ENCODE measurements at regions of chr12 and their contacts with region 1.

Region 1: GRCh38 chr12:12890815-12891645 is at the start of gene GPRC5A:
- DNase-seq: peak; percentile 87
- H3K27ac ChIP-seq: peak within 1 kb of the TSS; percentile 92
- CTCF ChIP-seq: peak; percentile 7; the same call in 1 of the 2 replicates

Region 2: DNA sequence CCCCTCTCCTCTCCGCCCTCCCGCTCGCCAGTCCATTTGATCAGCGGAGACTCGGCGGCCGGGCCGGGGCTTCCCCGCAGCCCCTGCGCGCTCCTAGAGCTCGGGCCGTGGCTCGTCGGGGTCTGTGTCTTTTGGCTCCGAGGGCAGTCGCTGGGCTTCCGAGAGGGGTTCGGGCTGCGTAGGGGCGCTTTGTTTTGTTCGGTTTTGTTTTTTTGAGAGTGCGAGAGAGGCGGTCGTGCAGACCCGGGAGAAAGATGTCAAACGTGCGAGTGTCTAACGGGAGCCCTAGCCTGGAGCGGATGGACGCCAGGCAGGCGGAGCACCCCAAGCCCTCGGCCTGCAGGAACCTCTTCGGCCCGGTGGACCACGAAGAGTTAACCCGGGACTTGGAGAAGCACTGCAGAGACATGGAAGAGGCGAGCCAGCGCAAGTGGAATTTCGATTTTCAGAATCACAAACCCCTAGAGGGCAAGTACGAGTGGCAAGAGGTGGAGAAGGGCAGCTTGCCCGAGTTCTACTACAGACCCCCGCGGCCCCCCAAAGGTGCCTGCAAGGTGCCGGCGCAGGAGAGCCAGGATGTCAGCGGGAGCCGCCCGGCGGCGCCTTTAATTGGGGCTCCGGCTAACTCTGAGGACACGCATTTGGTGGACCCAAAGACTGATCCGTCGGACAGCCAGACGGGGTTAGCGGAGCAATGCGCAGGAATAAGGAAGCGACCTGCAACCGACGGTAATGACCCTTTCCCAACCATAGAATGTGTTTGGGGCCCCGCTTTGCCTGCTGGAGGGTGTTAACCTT is 173.2 kb before region 1 on chr12:
- CTCF ChIA-PET with region 1: no interaction called
- POLR2A ChIA-PET with region 1: no interaction called
- DNase-seq: no peak
- H3K27ac ChIP-seq: peak overlapping the region; percentile 99
- CTCF ChIP-seq: no peak

Region 3: DNA sequence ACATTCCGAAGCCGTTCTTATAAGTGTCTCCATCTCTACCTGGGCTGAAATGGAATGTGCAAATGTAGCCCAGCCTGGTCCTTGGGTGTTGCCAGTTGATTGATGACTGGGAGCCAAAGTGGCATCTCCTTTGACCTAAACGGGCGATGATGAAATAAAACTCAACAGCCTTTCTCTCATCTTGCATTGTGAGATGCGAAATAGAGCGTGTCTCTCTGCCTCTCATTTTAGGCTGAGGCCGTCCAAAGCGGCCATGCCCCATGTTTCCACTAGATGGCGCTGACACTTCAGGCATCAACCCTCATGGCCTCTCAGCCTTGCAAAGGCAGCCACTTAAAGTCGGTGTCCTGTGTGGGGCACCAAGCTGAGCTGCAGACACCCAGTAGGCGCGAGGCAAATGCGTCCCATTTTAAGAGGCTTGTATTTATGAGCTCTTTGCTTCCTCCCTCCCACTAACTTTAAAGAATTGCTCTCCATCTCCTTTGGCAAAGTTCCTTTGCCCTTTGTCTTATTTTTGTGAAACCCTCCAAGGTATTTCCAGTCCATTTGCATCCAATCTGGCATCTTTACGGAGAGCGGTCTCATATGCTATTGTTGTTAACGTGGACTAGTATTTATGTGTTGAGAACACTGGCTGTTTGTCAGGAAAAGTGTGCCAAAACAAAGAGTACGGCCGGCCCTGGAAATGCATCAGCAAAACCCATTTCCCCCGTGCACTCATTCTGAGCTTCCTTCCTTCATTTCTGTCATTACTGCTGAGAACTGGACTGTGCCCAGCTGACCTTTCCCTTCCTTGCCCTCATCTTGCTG is 25.3 kb after region 1 on chr12:
- CTCF ChIA-PET with region 1: interaction called, 11 read pairs
- POLR2A ChIA-PET with region 1: no interaction called
- DNase-seq: no peak
- H3K27ac ChIP-seq: no peak overlapping the region
- CTCF ChIP-seq: peak; percentile 76